Calu3 (cell line): ENCODE measurements at regions of chr9 and their contacts with region 1.

Region 1: DNA sequence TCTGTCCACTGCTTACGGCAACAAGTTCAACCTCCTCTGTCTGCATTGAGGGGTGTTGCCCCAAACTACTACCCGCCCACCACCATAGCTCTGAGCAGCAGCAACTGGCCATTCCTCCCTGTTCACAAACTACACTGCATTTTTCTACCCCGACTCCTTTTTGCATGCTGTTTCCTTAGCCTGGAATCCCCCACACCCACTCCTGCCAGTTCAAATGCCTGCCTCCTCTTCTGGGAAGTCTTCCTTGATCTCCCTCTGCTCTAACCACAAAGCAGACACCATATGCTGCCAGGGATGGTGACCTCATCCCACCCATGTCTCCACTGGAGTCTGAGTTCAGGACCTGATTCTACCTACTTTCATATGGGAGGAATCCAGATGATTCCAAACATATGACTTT is 13.3 kb downstream of the ALDH1B1 start:
- DNase-seq: no peak
- H3K4me3 Mint-ChIP-seq: no peak overlapping the region
- H3K27ac Mint-ChIP-seq: no peak overlapping the region
- H3K4me1 Mint-ChIP-seq: no peaks in the 10 kb centered on the region
- H3K27me3 Mint-ChIP-seq: peaks cover 13% of the 10 kb centered on the region
- CTCF ChIP-seq: no peak

Region 2: GRCh38 chr9:38371495-38371894 is 34.3 kb before region 1 on chr9:
- CTCF ChIA-PET with region 1: no interaction called
- intact Hi-C with region 1: loop called (anchors 1 kb)
- DNase-seq: peak; percentile 14
- H3K4me3 Mint-ChIP-seq: no peak overlapping the region
- H3K27ac Mint-ChIP-seq: no peak overlapping the region
- H3K4me1 Mint-ChIP-seq: no peaks in the 10 kb centered on the region
- H3K27me3 Mint-ChIP-seq: peaks cover 11% of the 10 kb centered on the region
- CTCF ChIP-seq: no peak

Region 3: GRCh38 chr9:38445154-38446043 is 39.6 kb after region 1 on chr9:
- CTCF ChIA-PET with region 1: no interaction called
- intact Hi-C with region 1: no loop called
- DNase-seq: no peak
- H3K4me3 Mint-ChIP-seq: no peak overlapping the region
- H3K27ac Mint-ChIP-seq: no peak overlapping the region
- H3K4me1 Mint-ChIP-seq: no peaks in the 10 kb centered on the region
- H3K27me3 Mint-ChIP-seq: no peaks in the 10 kb centered on the region
- CTCF ChIP-seq: no peak